ENCODE measurements at regions of chr4 and their contacts with region 1.

Region 1: DNA sequence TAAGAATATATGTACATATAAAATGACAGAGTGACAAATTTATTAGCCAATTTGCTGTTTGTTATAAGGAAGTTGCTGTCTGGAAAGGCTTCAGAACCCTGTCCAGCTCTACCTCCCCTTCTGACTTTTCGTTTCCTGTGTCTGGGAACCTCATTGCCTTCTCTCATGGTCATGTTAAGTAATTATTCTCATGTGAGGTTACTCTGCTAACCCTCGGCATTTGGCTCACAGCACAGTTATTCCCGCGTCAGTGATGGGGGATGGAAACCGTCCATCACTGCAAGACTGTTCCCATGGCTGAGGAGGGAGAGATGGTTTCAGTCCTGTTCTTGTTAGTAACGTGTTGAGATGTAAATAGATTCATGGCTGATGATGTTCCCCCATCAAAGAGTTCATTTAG is 11.9 kb downstream of the EDNRA start:
- DNase-seq: peak; percentile 22 to 80
- ATAC-seq: peak; percentile 82 to 94 (median 90)
- H3K4me3 ChIP-seq: peak overlapping the region in 2 of 10 donors; percentile 4 to 28
- H3K27ac ChIP-seq: peak overlapping the region in 6 of 10 donors; percentile 26 to 72 (median 44)
- H3K4me1 ChIP-seq: peaks cover 0 to 76% (median 10%) of the 10 kb centered on the region in 9 donors
- H3K27me3 ChIP-seq: no peaks in the 10 kb centered on the region
- CTCF ChIP-seq: no peak

Region 2: GRCh38 chr4:147361726-147362125 is 131.0 kb before region 1 on chr4:
- intact Hi-C with region 1: loop called in 2 of 10 experiments (anchors 5 to 10 kb)
- DNase-seq: peak in 1 of 2 donors; percentile 41
- ATAC-seq: peak in 7 of 8 donors; percentile 71 to 85 (median 78)
- H3K4me3 ChIP-seq: no peak overlapping the region
- H3K27ac ChIP-seq: peak overlapping the region; percentile 5 to 90 (median 74)
- H3K4me1 ChIP-seq: peaks cover 0 to 36% (median 12%) of the 10 kb centered on the region in 9 donors
- H3K27me3 ChIP-seq: no peaks in the 10 kb centered on the region
- CTCF ChIP-seq: no peak

Region 3: DNA sequence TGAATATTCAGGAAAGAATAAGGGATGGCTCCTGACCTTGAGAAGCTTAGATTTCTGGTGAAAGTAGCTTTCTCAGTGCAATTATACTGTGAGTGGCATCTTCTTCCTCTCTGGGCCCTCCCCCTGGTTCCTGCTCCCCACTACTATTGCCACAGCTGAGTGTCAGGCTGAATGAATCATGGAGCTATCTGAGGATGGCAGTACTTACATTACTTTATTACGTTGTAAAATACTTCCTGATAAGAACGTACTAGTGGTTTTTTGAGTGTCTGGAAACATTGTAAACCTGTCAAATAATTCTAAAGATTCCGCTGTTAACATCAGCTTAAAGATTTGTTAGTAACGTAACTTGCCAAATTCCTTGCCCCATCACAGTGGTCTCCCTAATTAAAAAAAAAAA is 275.4 kb after region 1 on chr4:
- intact Hi-C with region 1: no loop called
- DNase-seq: no peak
- ATAC-seq: peak in 2 of 8 donors; percentile 34 to 80
- H3K4me3 ChIP-seq: no peak overlapping the region
- H3K27ac ChIP-seq: no peak overlapping the region
- H3K4me1 ChIP-seq: peaks cover 12 to 60% (median 44%) of the 10 kb centered on the region in 9 donors
- H3K27me3 ChIP-seq: no peaks in the 10 kb centered on the region
- CTCF ChIP-seq: no peak

Measured in heart right ventricle (tissue), 16 donors.